ENCODE measurements at regions of chr7 and their contacts with region 1.

Region 1: GRCh38 chr7:107180378-107180777 is 11.6 kb downstream of the HBP1 start:
- DNase-seq: no peak
- CTCF ChIP-seq: no peak

Region 2: GRCh38 chr7:106535234-106536026 is 644.9 kb before region 1 on chr7:
- in situ Hi-C with region 1: no loop called
- DNase-seq: no peak
- CTCF ChIP-seq: no peak

Region 3: DNA sequence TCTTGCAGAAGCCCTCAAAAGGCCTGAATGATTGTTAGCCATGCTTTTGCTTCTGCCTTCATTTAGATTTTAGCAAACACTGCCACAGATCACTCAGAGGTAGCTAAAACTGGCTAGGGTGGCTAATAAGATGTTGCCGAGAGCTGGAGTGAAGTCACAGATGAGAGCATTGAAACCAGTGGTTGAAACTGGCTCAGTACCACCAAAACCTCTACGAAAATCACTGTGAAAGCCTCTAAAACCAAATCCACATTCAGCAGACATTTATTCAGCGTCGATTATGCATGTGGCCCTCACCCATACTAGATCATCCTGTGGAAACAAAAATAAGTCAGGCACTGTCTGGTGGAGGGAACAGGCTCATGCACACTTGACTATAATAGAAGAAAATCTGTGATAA is 264.5 kb before region 1 on chr7:
- in situ Hi-C with region 1: no loop called
- DNase-seq: peak; percentile 62
- CTCF ChIP-seq: no peak

Region 4: DNA sequence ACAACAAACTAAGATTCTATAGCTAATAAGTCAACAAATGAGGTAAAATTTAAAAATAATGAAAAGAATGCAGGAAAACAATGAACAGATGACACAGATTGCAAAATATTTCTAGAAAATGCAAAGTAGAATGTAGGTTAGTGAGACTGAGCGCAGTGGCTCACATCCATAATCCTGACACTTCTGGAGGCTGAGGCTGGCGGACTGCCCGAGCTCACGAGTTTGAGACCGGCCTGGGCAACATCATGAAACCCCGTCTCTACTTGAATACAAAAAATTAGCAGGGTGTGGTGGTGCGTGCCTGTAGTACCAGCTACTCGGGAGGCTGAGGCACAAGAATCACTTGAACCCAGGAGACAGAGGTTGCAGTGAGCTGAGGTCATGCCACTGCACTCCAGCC is 243.5 kb after region 1 on chr7:
- in situ Hi-C with region 1: no loop called
- DNase-seq: no peak
- CTCF ChIP-seq: no peak

Region 5: GRCh38 chr7:107743567-107744344 is 563.4 kb after region 1 on chr7 and contains the start of gene CBLL1:
- in situ Hi-C with region 1: loop called (anchors 25 kb)
- DNase-seq: peak; percentile 91
- CTCF ChIP-seq: peak; percentile 78

Measured in GM13977 (cell line).